Astrocyte of the cerebellum (primary cell): ENCODE measurements at regions of chr3 and their contacts with region 1.

Region 1: DNA sequence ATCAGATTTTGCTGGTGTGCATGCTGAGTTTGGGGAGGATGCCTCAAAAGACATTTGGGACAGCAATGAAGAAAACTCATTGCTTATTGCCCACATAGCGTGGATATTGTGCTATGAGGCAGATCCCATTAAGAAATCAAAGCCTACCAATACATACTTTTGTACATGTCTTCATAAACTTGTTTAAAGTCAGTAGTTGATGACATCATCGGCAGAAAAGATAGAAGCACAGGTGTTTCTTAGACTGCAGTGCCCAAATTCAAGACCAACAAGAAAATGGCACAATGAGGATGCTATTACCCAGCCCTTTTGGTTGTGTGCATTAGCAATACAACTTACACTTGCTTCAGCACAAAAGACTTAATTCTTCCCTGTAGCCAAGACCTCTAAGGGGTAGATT is 428.7 kb upstream of the RARB start:
- DNase-seq: no peak
- H3K4me3 ChIP-seq: no peak overlapping the region
- CTCF ChIP-seq: no peak

Region 2: DNA sequence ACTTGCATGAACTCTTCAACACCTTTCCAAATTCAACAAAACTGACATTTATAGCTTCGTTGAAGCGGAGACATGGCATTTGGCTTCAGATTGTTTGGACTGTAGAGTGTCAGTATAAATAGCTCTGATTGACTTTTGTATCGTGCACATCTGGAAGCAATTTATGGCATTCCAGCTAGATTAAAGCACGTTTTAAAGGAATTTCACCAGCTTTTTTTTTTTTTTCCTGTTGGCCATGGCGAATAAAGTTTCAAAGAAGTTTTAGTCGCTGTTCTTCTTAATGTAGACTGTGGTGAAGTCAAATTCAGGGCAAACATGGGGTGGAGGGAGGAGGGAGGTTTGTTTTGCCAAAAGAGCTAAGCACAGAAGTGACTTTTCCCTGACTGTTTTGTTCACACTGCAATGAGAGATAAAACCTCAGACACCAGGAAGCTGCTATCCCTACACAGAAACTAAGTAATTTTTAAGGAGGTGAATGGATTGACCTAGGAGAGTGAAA is 37.7 kb after region 1 on chr3:
- in situ Hi-C with region 1: loop called (anchors 5 kb)
- DNase-seq: peak; percentile 76
- H3K4me3 ChIP-seq: no peak overlapping the region
- CTCF ChIP-seq: no peak

Region 3: GRCh38 chr3:25362118-25362517 is 362.8 kb after region 1 on chr3:
- in situ Hi-C with region 1: no loop called
- DNase-seq: no peak
- H3K4me3 ChIP-seq: no peak overlapping the region
- CTCF ChIP-seq: no peak